ENCODE measurements at regions of chr15 and their contacts with region 1.

Region 1: DNA sequence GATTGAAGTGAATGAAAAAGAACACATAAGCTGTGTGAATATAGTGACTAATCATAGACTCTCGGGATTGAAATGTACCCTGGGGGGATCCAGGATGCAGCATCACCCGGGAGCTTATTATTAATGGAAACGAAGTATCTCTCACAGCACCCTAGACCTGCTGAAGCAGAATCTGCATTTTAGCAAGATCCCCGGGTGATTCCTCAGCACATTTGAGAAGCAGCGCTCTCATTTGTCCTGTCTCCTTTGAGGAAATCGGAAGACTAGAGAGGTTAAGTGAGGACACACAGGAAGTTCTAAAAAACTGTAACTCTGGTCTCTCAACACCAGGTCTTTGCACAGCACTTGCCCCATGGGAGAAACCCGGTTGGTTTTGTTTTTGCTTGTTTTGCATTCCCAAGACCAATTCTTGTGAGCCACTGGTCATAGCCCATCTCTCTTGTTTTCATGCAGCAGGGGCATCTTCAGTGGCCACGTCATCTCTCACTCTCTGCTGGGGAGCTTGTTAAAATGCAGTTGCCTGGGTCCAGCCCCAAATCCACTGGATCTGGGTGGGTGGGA is 30.2 kb downstream of the ZNF710 start:
- DNase-seq: peak; percentile 31
- H3K4me3 Mint-ChIP-seq: no peak overlapping the region
- H3K27ac Mint-ChIP-seq: peak overlapping the region; percentile 80
- H3K4me1 Mint-ChIP-seq: peaks cover 63% of the 10 kb centered on the region
- H3K27me3 Mint-ChIP-seq: no peaks in the 10 kb centered on the region

Region 2: GRCh38 chr15:89496155-89497098 is 534.9 kb before region 1 on chr15 and contains the start of gene RHCG:
- CTCF ChIA-PET with region 1: no interaction called
- POLR2A ChIA-PET with region 1: no interaction called
- DNase-seq: no peak
- H3K4me3 Mint-ChIP-seq: no peak within 1 kb of the TSS
- H3K27ac Mint-ChIP-seq: no peak within 1 kb of the TSS
- H3K4me1 Mint-ChIP-seq: peaks cover 7% of the 10 kb centered on the region
- H3K27me3 Mint-ChIP-seq: peaks cover 39% of the 10 kb centered on the region
- total RNA-seq, gene RHCG: not detected

Region 3: DNA sequence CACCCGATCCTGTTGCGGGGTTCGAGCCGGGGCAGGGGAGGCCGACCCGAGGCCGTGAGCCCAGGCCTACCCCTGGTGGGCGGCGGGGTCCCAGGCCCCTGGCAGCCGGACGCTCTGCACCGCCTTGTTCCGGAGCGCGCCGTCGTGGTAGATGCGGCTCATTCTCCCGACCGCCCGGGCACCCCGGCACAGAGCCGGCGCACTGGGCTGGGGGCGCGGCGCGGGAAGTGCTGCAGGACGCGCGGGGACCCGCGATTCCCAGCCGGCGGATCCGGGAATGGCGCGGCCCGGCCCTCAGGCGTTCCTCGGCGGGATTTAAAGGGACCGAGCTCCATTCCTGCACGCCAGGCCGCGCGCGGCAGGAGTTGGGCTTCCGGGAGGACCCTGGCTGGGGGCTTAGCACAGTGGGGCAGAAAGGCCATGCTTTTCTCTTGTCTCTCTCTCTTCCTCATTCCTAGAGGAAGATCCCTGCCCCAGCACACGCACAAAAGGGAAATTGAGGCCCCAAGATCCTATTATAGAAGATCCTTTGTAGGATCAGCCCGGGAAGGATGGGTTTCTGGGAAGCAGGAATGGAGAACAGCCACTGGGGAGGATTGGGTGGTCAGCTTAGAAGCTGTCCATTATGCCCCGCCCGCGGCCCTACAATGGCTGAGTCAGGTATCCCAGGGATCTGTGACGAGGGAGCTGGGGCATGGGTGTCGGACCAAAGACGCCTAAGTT is 118.5 kb before region 1 on chr15 and contains the start of gene ARPIN:
- CTCF ChIA-PET with region 1: no interaction called
- POLR2A ChIA-PET with region 1: no interaction called
- DNase-seq: no peak
- H3K4me3 Mint-ChIP-seq: no peak within 1 kb of the TSS
- H3K27ac Mint-ChIP-seq: no peak within 1 kb of the TSS
- H3K4me1 Mint-ChIP-seq: peaks cover 3% of the 10 kb centered on the region
- H3K27me3 Mint-ChIP-seq: peaks cover 44% of the 10 kb centered on the region
- total RNA-seq, gene ARPIN: not detected

Region 4: GRCh38 chr15:89991312-89991711 is 40.0 kb before region 1 on chr15:
- CTCF ChIA-PET with region 1: no interaction called
- POLR2A ChIA-PET with region 1: no interaction called
- DNase-seq: no peak
- H3K4me3 Mint-ChIP-seq: no peak overlapping the region
- H3K27ac Mint-ChIP-seq: no peak overlapping the region
- H3K4me1 Mint-ChIP-seq: no peaks in the 10 kb centered on the region
- H3K27me3 Mint-ChIP-seq: no peaks in the 10 kb centered on the region

Region 5: GRCh38 chr15:90013503-90013937 is 17.8 kb before region 1 on chr15:
- CTCF ChIA-PET with region 1: interaction called, 7 read pairs
- POLR2A ChIA-PET with region 1: interaction called, 46 read pairs
- DNase-seq: no peak
- H3K4me3 Mint-ChIP-seq: peak overlapping the region; percentile 44
- H3K27ac Mint-ChIP-seq: peak overlapping the region; percentile 86
- H3K4me1 Mint-ChIP-seq: peaks cover 52% of the 10 kb centered on the region
- H3K27me3 Mint-ChIP-seq: no peaks in the 10 kb centered on the region

Measured in activated CD4-positive, alpha-beta memory T cell treated with anti-CD3 and anti-CD28 coated beads, Interleukin-2, amount 10 ng/mL, durations not matched to agents 7 days and 5 days (primary cell).